ENCODE measurements at regions of chr3 and their contacts with region 1.

Region 1: DNA sequence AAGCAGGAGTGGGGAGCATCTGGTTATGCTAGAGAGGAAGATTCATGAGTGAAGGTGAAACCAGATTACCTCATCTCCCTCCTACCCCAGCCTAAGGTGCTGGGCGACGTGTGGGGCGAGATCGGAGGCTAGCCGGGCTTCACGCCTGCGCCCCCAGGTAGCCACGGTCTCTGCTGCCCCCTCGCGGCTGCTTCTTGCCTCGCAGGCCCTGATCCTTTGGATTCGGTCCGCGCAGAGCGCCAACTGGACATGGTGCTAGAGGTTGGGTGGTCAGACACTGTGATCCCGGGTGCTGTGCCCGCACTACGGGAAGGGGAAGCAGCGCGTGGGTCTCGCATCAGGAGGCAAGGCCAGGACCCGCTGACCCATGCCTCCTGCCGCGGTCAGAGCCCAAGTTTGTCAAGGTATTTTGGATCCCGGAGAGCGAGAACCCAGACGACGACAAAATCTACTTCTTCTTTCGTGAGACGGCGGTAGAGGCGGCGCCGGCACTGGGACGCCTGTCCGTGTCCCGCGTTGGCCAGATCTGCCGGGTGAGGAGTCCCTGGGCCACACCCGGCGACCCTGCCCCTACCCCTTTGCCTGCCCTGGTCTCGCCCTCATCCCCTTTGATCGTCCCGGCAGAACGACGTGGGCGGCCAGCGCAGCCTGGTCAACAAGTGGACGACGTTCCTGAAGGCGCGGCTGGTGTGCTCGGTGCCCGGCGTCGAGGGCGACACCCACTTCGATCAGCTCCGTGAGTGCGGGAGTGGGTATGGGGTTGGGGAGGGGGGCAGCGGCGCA is 4.2 kb downstream of the SEMA3B start:
- DNase-seq: peak; percentile 96

Region 2: DNA sequence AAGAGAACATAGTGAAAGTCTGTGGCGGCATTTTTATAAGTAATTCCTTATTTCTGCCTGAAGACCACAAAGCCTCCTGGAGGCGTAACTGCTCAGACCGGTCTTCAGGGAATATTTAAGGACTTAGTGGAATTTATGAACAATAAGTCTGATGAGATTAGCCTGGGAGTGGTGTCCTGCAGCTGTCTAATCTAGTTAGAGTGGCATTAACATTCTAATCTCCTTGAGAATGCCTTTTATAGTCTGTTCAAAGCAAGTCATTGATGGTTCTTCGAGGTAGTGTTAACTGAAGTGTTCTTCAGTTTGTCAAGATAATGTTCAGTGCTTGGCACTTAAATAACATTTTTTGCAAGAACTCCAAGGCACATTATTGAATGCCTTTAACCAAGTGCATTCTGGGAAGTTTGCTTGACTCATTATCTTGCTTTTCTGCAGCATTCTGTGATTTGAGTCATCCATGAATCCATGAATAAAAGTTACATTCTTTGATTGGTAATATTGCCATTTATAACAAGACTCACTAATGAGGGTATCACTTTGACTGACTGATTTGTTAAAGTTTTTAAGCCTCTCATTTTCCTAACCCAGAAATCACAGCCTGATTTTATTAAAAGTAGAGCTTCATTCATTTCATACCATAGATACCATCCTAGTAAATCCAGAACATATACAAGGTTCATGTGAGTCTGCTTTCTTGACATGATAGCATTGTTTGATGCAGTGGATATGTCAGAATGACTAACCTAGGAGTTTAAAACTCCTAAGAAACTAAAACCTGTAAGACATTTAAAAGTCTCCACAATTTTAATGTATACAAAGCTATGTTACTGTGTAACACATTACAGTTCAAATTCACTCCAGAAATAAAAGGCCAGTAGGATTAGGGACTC is 171.9 kb before region 1 on chr3:
- intact Hi-C with region 1: no loop called
- DNase-seq: no peak

Region 3: GRCh38 chr3:50121416-50122032 is 151.6 kb before region 1 on chr3:
- intact Hi-C with region 1: loop called (anchors 5 kb)
- DNase-seq: no peak

Region 4: GRCh38 chr3:50260027-50260941 is 12.8 kb before region 1 on chr3:
- intact Hi-C with region 1: loop called (anchors 1 kb)
- DNase-seq: peak; percentile 97

Region 5: GRCh38 chr3:50298836-50299637 is 25.9 kb after region 1 on chr3 and contains the starts of genes HYAL3 and NAA80:
- intact Hi-C with region 1: no loop called
- DNase-seq: peak; percentile 100
- total RNA-seq, gene HYAL3: 1.3 TPM
- total RNA-seq, gene NAA80: 8.5 TPM

Region 6: GRCh38 chr3:50674349-50675178 is 401.5 kb after region 1 on chr3 and contains the start of gene DOCK3:
- intact Hi-C with region 1: no loop called
- DNase-seq: no peak
- total RNA-seq, gene DOCK3: 6.1 TPM